ENCODE measurements at regions of chrX and their contacts with region 1.

Region 1: GRCh38 chrX:1528186-1528883 is 8.7 kb downstream of the P2RY8 start:
- H3K4me3 Mint-ChIP-seq: no peak overlapping the region
- H3K27ac Mint-ChIP-seq: no peak overlapping the region
- H3K4me1 Mint-ChIP-seq: no peaks in the 10 kb centered on the region
- H3K27me3 Mint-ChIP-seq: no peaks in the 10 kb centered on the region

Region 2: DNA sequence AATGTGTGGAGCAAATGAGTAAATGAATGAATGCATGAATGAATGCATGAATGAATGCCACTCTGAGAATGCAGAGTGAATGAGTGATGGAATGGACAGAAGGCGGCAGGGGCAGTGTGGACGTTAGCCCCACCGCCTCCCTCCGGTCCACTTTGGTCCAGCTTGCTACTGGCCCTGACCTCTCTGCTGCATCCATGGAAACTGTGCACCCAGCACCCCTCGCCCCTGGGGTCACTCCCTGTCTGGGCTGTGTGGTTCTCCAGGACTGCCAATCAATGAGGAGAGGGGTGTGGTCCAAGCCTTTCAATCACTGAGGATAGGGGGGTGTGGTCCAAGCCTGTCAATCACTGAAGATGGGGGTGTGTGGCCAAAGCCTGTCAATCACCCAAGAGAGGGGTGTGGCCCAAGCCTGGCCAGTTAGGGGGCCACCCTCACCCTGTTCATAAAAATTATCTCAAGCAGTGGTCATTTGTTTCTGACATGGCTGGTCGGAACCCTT is 36.4 kb before region 1 on chrX:
- intact Hi-C with region 1: loop called (anchors 5 kb)
- H3K4me3 Mint-ChIP-seq: no peak overlapping the region
- H3K27ac Mint-ChIP-seq: no peak overlapping the region
- H3K4me1 Mint-ChIP-seq: peaks cover 25% of the 10 kb centered on the region
- H3K27me3 Mint-ChIP-seq: peaks cover 8% of the 10 kb centered on the region